ENCODE measurements at regions of chr1 and their contacts with region 1.

Region 1: GRCh38 chr1:159829273-159829634 is 2.6 kb downstream of the SLAMF8 start:
- DNase-seq: peak; percentile 22 to 43
- ATAC-seq: peak; percentile 85 to 95
- H3K4me3 ChIP-seq: no peak overlapping the region
- H3K27ac ChIP-seq: no peak overlapping the region
- H3K4me1 ChIP-seq: no peaks in the 10 kb centered on the region
- CTCF ChIP-seq: no peak; the same call in 2 of the 3 replicates
- EP300 ChIP-seq: no peak
- POLR2A ChIP-seq: no peak
- RAD21 ChIP-seq: peak in 1 of 2 experiments; percentile 17; a peak in 1 of 5 replicates

Region 2: GRCh38 chr1:159370855-159371254 is 458.4 kb before region 1 on chr1:
- CTCF ChIA-PET with region 1: no interaction called
- POLR2A ChIA-PET with region 1: no interaction called
- DNase-seq: no peak
- ATAC-seq: no peak
- H3K4me3 ChIP-seq: no peak overlapping the region
- H3K27ac ChIP-seq: no peak overlapping the region
- H3K4me1 ChIP-seq: no peaks in the 10 kb centered on the region
- CTCF ChIP-seq: no peak
- EP300 ChIP-seq: no peak
- POLR2A ChIP-seq: no peak
- RAD21 ChIP-seq: no peak

Region 3: DNA sequence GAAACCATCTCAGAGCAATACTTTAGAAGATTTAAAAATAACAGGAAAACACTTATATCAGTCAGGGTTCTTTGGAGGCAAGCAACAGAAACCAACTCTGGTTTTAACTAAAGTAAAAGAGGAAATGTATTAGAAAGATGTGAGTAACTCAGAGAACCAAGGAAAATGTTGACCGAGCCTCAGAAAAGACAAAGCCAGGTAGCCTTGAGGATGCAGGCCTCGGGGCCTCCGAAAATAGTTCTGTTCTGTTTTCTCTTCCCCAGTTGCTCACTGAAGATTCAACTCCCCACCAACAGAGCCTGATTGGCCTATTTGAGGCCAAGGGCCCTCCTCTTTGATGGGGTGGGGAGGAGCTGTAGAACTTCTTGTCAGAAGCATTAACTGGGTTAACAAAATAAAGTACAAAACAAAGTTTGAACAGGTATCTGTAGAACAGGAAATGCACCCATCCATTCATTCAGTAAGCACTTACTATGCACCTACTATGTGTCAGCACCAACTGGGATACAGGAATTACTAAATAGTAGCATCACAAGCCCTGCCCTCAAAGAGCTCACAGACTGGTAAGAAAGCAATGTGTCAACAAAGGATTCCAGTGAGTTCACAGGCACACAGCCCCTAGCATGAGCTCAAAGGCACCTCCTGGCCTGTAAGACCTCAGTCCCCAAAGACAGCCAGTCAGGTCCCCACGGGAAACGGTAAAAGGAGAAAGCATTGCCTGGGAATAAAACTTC is 10.0 kb after region 1 on chr1:
- CTCF ChIA-PET with region 1: interaction called, 10 read pairs
- POLR2A ChIA-PET with region 1: interaction called, 3 read pairs
- DNase-seq: no peak
- ATAC-seq: no peak
- H3K4me3 ChIP-seq: no peak overlapping the region
- H3K27ac ChIP-seq: no peak overlapping the region
- H3K4me1 ChIP-seq: no peaks in the 10 kb centered on the region
- CTCF ChIP-seq: no peak
- EP300 ChIP-seq: no peak
- POLR2A ChIP-seq: no peak
- RAD21 ChIP-seq: no peak

Region 4: GRCh38 chr1:160354388-160354985 is 525.2 kb after region 1 on chr1:
- CTCF ChIA-PET with region 1: no interaction called
- POLR2A ChIA-PET with region 1: no interaction called
- DNase-seq: peak; percentile 30 to 48
- ATAC-seq: peak; percentile 65 to 88; a peak in 4 of 6 replicates
- H3K4me3 ChIP-seq: no peak overlapping the region
- H3K27ac ChIP-seq: no peak overlapping the region
- H3K4me1 ChIP-seq: no peaks in the 10 kb centered on the region
- CTCF ChIP-seq: peak; percentile 43
- EP300 ChIP-seq: no peak
- POLR2A ChIP-seq: no peak
- RAD21 ChIP-seq: no peak